ENCODE measurements at regions of chr17 and their contacts with region 1.

Region 1: GRCh38 chr17:4908301-4908700 is 5.4 kb upstream of the CHRNE start:
- DNase-seq: peak; percentile 87
- H3K4me3 ChIP-seq: no peak overlapping the region
- H3K27ac ChIP-seq: peak overlapping the region; percentile 89
- H3K4me1 ChIP-seq: peaks cover 24% of the 10 kb centered on the region
- H3K27me3 ChIP-seq: no peaks in the 10 kb centered on the region
- CTCF ChIP-seq: no peak

Region 2: DNA sequence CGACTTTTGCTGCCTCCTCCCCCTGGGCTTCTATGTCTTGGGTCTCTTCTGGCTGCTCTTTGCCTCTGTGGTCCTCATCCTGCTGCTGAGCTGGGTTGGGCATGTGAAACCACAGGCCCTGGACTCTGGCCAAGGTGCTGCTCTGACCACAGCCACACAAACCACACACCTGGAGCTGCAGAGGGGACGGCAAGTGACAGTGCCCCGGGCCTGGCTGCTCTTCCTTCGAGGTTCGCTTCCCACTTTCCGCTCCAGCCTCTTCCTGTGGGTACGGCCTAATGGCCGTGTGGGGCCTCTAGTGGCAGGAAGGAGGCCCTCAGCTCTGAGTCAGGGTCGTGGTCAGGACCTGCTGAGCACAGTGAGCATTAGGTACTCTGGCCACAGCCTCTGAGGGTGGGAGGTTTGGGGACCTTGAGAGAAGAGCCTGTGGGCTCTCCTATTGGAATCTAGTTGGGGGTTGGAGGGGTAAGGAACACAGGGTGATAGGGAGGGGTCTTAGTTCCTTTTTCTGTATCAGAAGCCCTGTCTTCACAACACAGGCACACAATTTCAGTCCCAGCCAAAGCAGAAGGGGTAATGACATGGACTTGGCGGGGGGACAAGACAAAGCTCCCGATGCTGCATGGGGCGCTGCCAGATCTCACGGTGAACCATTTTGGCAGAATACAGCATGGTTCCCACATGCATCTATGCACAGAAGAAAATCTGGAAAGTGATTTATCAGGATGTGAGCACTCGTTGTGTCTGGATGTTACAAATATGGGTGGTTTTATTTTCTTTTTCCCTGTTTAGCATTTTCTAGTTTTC is 26.1 kb after region 1 on chr17:
- CTCF ChIA-PET with region 1: interaction called, 8 read pairs
- dilution Hi-C with region 1: no loop called
- in situ Hi-C with region 1: no loop called
- intact Hi-C with region 1: loop called (anchors 1 kb)
- DNase-seq: peak; percentile 39
- H3K4me3 ChIP-seq: no peak overlapping the region
- H3K27ac ChIP-seq: no peak overlapping the region
- H3K4me1 ChIP-seq: peaks cover 18% of the 10 kb centered on the region
- H3K27me3 ChIP-seq: no peaks in the 10 kb centered on the region
- CTCF ChIP-seq: peak in 1 of 2 donors; percentile 49

Region 3: DNA sequence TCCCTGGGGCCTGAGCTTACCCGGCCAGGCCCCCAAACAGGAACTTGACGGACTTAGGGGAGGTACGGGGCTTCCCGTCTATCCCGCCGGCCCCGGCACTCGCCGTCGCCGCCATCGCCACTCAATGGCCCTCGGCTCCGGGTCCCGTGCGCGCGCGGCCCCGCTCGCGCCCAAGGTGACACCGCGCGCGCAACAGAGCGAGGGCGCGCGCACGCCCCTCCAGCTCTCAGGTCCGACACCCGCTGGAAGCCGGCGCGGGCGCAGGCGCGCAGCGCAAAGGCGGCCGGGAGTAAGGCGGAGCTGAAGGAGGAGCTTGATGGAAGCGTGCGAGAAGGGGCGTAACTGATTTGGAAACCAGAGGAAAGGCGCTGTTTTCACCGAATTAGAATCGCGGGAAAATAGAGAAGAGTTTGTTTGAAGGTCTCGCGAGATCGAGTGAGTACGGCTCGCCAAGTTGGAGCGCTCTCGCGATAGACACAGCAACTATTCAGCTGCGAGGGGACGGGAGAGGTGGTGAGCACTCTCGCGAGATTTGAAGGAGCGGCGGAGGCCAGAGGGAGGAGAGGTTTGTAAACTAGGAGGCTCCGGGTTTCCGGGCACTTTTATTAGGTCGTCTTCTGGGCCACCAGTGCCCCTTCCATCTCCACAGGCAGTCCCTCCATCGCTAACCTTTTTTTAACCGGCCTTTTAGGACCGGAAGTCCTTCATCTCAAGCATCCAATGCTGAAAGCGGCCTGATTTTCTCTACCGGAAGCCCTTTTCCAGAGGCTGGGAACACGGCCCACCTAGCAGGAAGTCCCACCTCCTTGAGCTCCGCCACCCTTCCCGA is 31.7 kb after region 1 on chr17 and contains the starts of genes RNF167 and SLC25A11:
- CTCF ChIA-PET with region 1: interaction called, 8 read pairs
- dilution Hi-C with region 1: no loop called
- in situ Hi-C with region 1: no loop called
- intact Hi-C with region 1: loop called (anchors 1 kb)
- DNase-seq: peak; percentile 100
- H3K4me3 ChIP-seq: peak within 1 kb of the TSS; percentile 68 to 92 (median 79)
- H3K27ac ChIP-seq: peak within 1 kb of the TSS; percentile 87
- H3K4me1 ChIP-seq: peaks cover 43% of the 10 kb centered on the region
- H3K27me3 ChIP-seq: no peaks in the 10 kb centered on the region
- CTCF ChIP-seq: no peak
- total RNA-seq, gene RNF167: 53.0 to 121 TPM
- total RNA-seq, gene SLC25A11: 35.5 to 46.7 TPM

Region 4: GRCh38 chr17:4966844-4967538 is 58.7 kb after region 1 on chr17:
- CTCF ChIA-PET with region 1: interaction called, 4 read pairs
- dilution Hi-C with region 1: no loop called
- in situ Hi-C with region 1: no loop called
- intact Hi-C with region 1: loop called (anchors 1 kb)
- DNase-seq: peak; percentile 100
- H3K4me3 ChIP-seq: peak overlapping the region; percentile 67 to 86 (median 81)
- H3K27ac ChIP-seq: peak overlapping the region; percentile 89
- H3K4me1 ChIP-seq: peaks cover 29% of the 10 kb centered on the region
- H3K27me3 ChIP-seq: no peaks in the 10 kb centered on the region
- CTCF ChIP-seq: no peak

Region 5: GRCh38 chr17:4986951-4987766 is 78.9 kb after region 1 on chr17 and contains the start of gene CAMTA2:
- CTCF ChIA-PET with region 1: interaction called, 3 read pairs
- dilution Hi-C with region 1: no loop called
- in situ Hi-C with region 1: no loop called
- intact Hi-C with region 1: loop called (anchors 1 kb)
- DNase-seq: peak; percentile 50
- H3K4me3 ChIP-seq: peak within 1 kb of the TSS; percentile 78 to 91 (median 85)
- H3K27ac ChIP-seq: peak within 1 kb of the TSS; percentile 38
- H3K4me1 ChIP-seq: peaks cover 14% of the 10 kb centered on the region
- H3K27me3 ChIP-seq: no peaks in the 10 kb centered on the region
- CTCF ChIP-seq: peak; percentile 26 to 72
- total RNA-seq, gene CAMTA2: 15.0 to 69.1 TPM

Region 6: GRCh38 chr17:4997302-4998026 is 89.2 kb after region 1 on chr17 and contains the starts of genes INCA1 and KIF1C:
- CTCF ChIA-PET with region 1: no interaction called
- dilution Hi-C with region 1: no loop called
- in situ Hi-C with region 1: no loop called
- intact Hi-C with region 1: loop called (anchors 1 kb)
- DNase-seq: peak; percentile 90
- H3K4me3 ChIP-seq: peak within 1 kb of the TSS; percentile 65 to 95 (median 82)
- H3K27ac ChIP-seq: peak within 1 kb of the TSS; percentile 43
- H3K4me1 ChIP-seq: peaks cover 12% of the 10 kb centered on the region
- H3K27me3 ChIP-seq: no peaks in the 10 kb centered on the region
- CTCF ChIP-seq: no peak
- total RNA-seq, gene INCA1: 0.33 to 0.42 TPM
- total RNA-seq, gene KIF1C: 105 to 198 TPM

Region 7: GRCh38 chr17:5065227-5065744 is 157.0 kb after region 1 on chr17:
- CTCF ChIA-PET with region 1: no interaction called
- dilution Hi-C with region 1: no loop called
- in situ Hi-C with region 1: loop called (anchors 10 kb)
- intact Hi-C with region 1: loop called (anchors 1 kb)
- DNase-seq: no peak
- H3K4me3 ChIP-seq: no peak overlapping the region
- H3K27ac ChIP-seq: no peak overlapping the region
- H3K4me1 ChIP-seq: no peaks in the 10 kb centered on the region
- H3K27me3 ChIP-seq: no peaks in the 10 kb centered on the region
- CTCF ChIP-seq: no peak

Measured in mammary epithelial cell (primary cell).